ENCODE measurements at regions of chr9 and their contacts with region 1.

Region 1: DNA sequence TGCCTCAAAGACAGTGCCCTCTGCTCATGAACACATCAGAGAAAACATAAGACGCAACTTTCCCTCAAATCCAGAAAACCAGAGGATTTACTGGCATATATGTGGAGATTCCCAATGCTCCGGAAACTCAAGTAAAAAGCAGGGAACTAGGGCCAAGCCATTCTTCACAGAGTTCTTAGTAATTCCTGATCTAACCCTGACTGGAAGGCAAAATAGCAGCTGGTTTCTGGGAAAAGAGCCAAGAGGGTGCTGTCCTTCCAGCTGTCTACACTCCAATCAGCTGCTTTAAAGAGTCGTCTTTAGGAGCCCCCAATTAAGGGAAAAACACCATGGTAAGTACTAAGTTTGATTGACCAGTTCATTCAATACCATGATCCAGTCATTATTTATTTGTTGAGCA is 49.6 kb downstream of the GNA14 start:
- DNase-seq: peak; percentile 17
- H3K4me3 ChIP-seq: no peak overlapping the region
- H3K27ac ChIP-seq: peak overlapping the region; percentile 77
- H3K4me1 ChIP-seq: peaks cover 57% of the 10 kb centered on the region
- H3K27me3 ChIP-seq: no peaks in the 10 kb centered on the region
- CTCF ChIP-seq: no peak

Region 2: GRCh38 chr9:77514886-77515711 is 83.4 kb before region 1 on chr9:
- intact Hi-C with region 1: loop called (anchors 5 kb)
- DNase-seq: no peak
- H3K4me3 ChIP-seq: no peak overlapping the region
- H3K27ac ChIP-seq: peak overlapping the region; percentile 79
- H3K4me1 ChIP-seq: peaks cover 42% of the 10 kb centered on the region
- H3K27me3 ChIP-seq: no peaks in the 10 kb centered on the region
- CTCF ChIP-seq: no peak

Region 3: GRCh38 chr9:77544546-77544945 is 54.0 kb before region 1 on chr9:
- intact Hi-C with region 1: no loop called
- DNase-seq: no peak
- H3K4me3 ChIP-seq: no peak overlapping the region
- H3K27ac ChIP-seq: no peak overlapping the region
- H3K4me1 ChIP-seq: no peaks in the 10 kb centered on the region
- H3K27me3 ChIP-seq: no peaks in the 10 kb centered on the region
- CTCF ChIP-seq: no peak

Region 4: DNA sequence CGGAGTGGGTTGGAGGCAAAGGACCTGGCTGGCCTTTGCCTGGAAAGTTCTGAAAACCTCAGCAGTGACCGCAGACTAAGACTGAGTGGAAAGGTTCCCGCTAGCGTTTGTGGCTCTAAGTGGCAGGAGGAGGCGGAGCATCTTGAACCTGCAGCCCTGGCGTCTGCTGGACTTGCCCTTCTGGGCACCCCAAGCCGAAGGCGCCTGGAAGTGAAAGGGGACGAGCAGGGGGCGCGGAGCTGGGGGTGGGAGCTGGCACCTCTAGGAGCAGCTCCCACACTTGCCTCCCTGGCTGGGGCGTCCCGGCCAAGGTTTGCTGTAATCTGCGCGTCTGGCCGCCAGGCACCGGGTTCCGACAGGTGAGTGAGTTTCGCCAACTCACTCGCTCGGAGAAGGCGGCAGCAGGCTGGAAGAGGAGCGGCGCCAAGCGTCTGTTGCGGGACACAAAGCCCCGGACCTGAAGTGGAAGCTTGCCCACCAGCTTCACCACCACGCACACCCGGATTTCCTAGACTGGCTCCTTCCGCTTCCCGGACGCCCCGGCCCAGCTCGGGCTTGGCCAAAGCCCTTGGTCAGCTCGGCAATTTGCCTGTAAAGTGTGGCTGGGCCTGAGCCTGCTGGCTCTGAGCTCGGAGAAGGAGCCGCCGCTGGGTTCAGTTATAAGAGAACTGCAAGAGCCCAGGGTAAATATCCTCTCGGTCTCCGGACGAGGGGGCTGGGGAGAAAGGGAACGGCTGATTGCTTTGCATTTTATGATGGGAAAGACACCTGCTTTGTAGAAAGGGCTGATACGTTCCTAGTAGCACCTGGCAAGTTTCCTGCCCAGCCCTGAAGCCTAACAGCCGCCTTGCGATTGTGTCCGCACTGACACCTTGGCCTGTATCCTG is 50.0 kb after region 1 on chr9 and contains the start of gene GNA14:
- intact Hi-C with region 1: loop called (anchors 10 kb)
- DNase-seq: peak; percentile 64
- H3K4me3 ChIP-seq: peak within 1 kb of the TSS; percentile 71
- H3K27ac ChIP-seq: peak within 1 kb of the TSS; percentile 72
- H3K4me1 ChIP-seq: peaks cover 25% of the 10 kb centered on the region
- H3K27me3 ChIP-seq: peaks cover 45% of the 10 kb centered on the region
- CTCF ChIP-seq: no peak
- total RNA-seq, gene GNA14: 2.2 TPM

Region 5: GRCh38 chr9:77663754-77664153 is 65.2 kb after region 1 on chr9:
- intact Hi-C with region 1: no loop called
- DNase-seq: no peak
- H3K4me3 ChIP-seq: no peak overlapping the region
- H3K27ac ChIP-seq: no peak overlapping the region
- H3K4me1 ChIP-seq: peaks cover 10% of the 10 kb centered on the region
- H3K27me3 ChIP-seq: no peaks in the 10 kb centered on the region
- CTCF ChIP-seq: no peak